ENCODE measurements at regions of chr9 and their contacts with region 1.

Region 1: DNA sequence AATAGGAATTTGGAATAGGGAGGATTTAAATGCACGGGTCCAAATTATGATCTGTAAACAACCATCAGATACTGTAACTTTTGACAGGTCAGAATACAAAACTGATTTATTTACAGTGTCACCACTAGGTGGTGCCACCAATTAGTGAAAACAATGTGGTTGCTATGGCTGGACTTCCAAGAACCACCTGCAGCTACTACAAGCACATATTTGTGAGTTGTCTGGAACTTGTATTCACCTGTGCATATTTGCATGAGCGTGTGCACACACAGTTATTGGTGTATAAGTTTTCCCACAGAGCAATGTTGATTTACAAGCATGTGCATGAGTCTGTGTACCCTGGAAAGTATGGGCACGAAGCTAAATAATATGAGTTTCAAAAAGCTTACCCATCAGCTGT is 3.0 kb upstream of the HRCT1 start:
- DNase-seq: peak; percentile 51 to 67 (median 55)
- ATAC-seq: peak; percentile 79
- H3K4me3 ChIP-seq: no peak overlapping the region
- H3K27ac ChIP-seq: no peak overlapping the region
- H3K4me1 ChIP-seq: peaks cover 0 to 20% of the 10 kb centered on the region in 2 experiments; a peak in 3 of 5 replicates
- H3K27me3 ChIP-seq: no peaks in the 10 kb centered on the region; a peak in 1 of 5 replicates
- CTCF ChIP-seq: peak; percentile 56 to 76 (median 62); a peak in 5 of 6 replicates
- EP300 ChIP-seq: no peak
- POLR2A ChIP-seq: no peak
- RAD21 ChIP-seq: peak; percentile 68 to 82

Region 2: DNA sequence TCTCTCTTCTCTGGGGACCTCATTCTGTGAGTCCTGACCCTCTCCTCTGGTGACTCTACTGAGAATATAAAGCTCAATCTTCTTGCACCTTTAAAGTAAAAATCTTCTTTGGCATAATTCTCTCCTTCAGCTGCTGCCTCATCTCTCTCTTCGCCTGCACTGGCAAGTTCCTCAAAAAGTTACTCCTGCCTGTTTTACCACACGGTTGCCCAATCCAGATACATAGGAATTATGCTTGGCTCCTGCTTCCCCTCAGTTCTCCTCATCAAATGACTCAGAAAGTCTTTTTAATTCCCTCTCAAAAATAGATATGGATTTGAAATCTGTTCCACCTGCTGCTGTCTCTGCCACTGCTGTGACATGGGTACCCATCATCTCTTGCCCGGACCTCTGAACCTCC is 11.4 kb before region 1 on chr9:
- CTCF ChIA-PET with region 1: no interaction called
- POLR2A ChIA-PET with region 1: no interaction called
- in situ Hi-C with region 1: no loop called
- intact Hi-C with region 1: no loop called
- DNase-seq: no peak
- ATAC-seq: no peak
- H3K4me3 ChIP-seq: no peak overlapping the region
- H3K27ac ChIP-seq: no peak overlapping the region
- H3K4me1 ChIP-seq: no peaks in the 10 kb centered on the region
- H3K27me3 ChIP-seq: peaks cover 0 to 6% of the 10 kb centered on the region in 2 experiments; a peak in 2 of 5 replicates
- CTCF ChIP-seq: no peak
- EP300 ChIP-seq: no peak
- POLR2A ChIP-seq: no peak
- RAD21 ChIP-seq: no peak

Region 3: DNA sequence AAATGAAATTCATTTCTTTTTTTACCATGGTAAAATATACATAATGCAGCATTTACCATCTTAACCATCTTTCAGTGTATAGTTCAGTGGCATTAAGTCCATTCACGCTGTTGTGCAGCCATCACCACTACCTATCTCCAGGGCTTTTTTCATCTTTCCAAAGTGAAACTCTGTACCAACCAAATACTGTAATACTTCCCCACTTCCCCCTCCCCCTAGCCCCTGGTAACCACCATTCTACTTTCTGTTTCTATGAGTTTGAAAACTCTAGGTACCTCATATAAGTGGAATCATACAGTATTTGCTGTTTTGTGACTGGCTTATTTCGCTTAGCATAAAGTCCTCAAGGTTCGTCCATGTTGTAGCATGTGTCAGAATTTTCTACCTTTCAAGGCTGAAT is 29.7 kb after region 1 on chr9:
- CTCF ChIA-PET with region 1: no interaction called
- POLR2A ChIA-PET with region 1: no interaction called
- in situ Hi-C with region 1: no loop called
- intact Hi-C with region 1: no loop called
- DNase-seq: no peak
- ATAC-seq: no peak
- H3K4me3 ChIP-seq: no peak overlapping the region
- H3K27ac ChIP-seq: no peak overlapping the region
- H3K4me1 ChIP-seq: no peaks in the 10 kb centered on the region; a peak in 1 of 5 replicates
- H3K27me3 ChIP-seq: no peaks in the 10 kb centered on the region
- CTCF ChIP-seq: no peak
- EP300 ChIP-seq: no peak
- POLR2A ChIP-seq: no peak
- RAD21 ChIP-seq: no peak

Region 4: DNA sequence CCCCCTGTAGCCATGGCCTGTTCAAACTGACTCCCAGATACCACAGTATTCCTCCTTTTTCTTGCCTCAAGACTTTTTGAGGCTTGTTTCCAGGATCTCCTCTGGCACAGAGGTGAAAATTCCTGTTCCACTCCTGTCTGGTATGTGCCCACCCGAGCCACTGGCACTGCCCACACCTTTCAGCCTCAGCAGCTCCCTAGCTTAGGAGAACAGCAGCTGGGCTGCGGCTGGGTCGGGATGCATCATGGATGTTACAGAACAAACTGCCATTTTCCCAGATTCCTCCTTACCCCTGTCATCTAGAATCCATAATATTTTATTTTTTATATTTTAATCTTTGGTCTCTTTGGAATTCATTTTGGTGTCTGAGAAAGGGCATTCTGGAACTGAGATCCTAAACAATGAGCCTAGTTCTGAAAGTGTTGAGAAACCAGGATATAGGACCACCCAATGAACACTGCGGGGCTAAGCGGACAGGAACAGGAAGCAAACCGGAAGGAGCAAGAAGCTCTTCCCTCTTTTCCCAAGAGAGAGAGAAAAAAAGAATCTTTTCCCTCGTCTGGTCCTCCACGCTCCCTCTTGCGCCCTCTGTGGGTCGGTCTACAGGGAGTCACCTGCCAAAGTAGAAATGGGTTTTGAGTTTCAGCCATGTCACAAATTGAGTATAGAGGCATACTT is 42.4 kb after region 1 on chr9:
- CTCF ChIA-PET with region 1: interaction called, 6 read pairs
- POLR2A ChIA-PET with region 1: no interaction called
- in situ Hi-C with region 1: loop called (anchors 5 kb)
- intact Hi-C with region 1: loop called (anchors 2 kb)
- DNase-seq: peak; percentile 76 to 86 (median 78)
- ATAC-seq: peak; percentile 87
- H3K4me3 ChIP-seq: no peak overlapping the region
- H3K27ac ChIP-seq: no peak overlapping the region; the same call in 2 of the 3 replicates
- H3K4me1 ChIP-seq: peaks cover 2 to 3% of the 10 kb centered on the region in 2 experiments; a peak in 3 of 5 replicates
- H3K27me3 ChIP-seq: no peaks in the 10 kb centered on the region
- CTCF ChIP-seq: peak; percentile 76 to 85 (median 81)
- EP300 ChIP-seq: no peak
- POLR2A ChIP-seq: no peak
- RAD21 ChIP-seq: peak; percentile 76 to 79

Region 5: GRCh38 chr9:36008774-36009300 is 105.8 kb after region 1 on chr9:
- CTCF ChIA-PET with region 1: interaction called, 15 read pairs
- POLR2A ChIA-PET with region 1: no interaction called
- in situ Hi-C with region 1: no loop called
- intact Hi-C with region 1: no loop called
- DNase-seq: peak; percentile 79 to 83 (median 80)
- ATAC-seq: peak; percentile 99
- H3K4me3 ChIP-seq: no peak overlapping the region
- H3K27ac ChIP-seq: no peak overlapping the region
- H3K4me1 ChIP-seq: peaks cover 0 to 6% of the 10 kb centered on the region in 2 experiments; a peak in 3 of 5 replicates
- H3K27me3 ChIP-seq: peaks cover 0 to 7% of the 10 kb centered on the region in 2 experiments; a peak in 1 of 5 replicates
- CTCF ChIP-seq: peak; percentile 99 to 100 (median 100)
- EP300 ChIP-seq: no peak
- POLR2A ChIP-seq: no peak
- RAD21 ChIP-seq: peak; percentile 52 to 77

Region 6: DNA sequence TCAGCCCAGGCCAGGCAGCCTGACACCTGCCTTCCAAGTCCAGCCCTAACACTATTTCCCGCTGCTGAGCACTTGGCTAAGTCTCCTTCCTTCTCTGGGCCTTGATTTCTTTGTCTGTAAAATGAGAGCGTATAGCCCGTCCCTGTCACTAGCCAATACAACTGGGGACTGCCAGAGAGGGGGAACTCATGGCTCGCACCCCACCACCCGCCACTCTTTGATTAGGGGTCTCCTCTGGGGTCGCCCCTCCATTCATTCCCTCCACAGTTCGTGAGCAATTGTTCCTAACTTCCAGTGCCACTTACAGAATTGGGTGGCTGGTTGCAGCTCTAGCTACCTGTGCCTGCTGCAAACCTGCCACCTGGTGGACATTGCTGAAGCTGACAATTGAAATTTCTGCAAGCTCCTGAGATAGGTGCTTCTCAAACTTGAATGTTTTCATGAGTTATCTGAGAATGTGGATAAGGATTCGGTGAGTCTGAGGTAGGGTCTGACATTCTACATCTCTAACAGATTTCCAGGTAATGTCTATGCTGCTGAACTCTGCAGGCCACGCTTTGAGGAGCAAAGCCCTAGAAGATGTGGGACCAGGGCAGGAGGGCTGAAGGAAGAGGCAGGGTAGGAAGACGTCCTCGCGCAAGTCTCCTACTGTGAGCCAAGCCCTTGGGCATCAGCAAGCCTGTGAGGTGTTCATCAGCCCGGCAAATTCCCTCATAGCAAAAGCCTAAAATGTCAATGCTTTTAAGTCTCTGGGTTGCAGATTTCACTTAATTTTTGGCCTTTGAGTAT is 120.4 kb after region 1 on chr9:
- CTCF ChIA-PET with region 1: interaction called, 22 read pairs
- POLR2A ChIA-PET with region 1: interaction called, 4 read pairs
- in situ Hi-C with region 1: loop called (anchors 5 kb)
- intact Hi-C with region 1: loop called (anchors 2 kb)
- DNase-seq: peak; percentile 34 to 69 (median 46)
- ATAC-seq: peak; percentile 80
- H3K4me3 ChIP-seq: no peak overlapping the region
- H3K27ac ChIP-seq: no peak overlapping the region
- H3K4me1 ChIP-seq: no peaks in the 10 kb centered on the region; a peak in 1 of 5 replicates
- H3K27me3 ChIP-seq: peaks cover 0 to 3% of the 10 kb centered on the region in 2 experiments; a peak in 1 of 5 replicates
- CTCF ChIP-seq: peak; percentile 72 to 84 (median 80)
- EP300 ChIP-seq: no peak
- POLR2A ChIP-seq: no peak
- RAD21 ChIP-seq: peak; percentile 73 to 81